HepG2 (cell line): ENCODE measurements at regions of chr6 and their contacts with region 1.

Region 1: GRCh38 chr6:137313928-137314855 is 95.0 kb upstream of the IFNGR1 start:
- DNase-seq: peak; percentile 71
- ATAC-seq: peak; percentile 87
- H3K4me3 ChIP-seq: no peak overlapping the region; a peak in 1 of 6 replicates
- H3K27ac ChIP-seq: peak overlapping the region; percentile 30
- H3K4me1 ChIP-seq: peaks cover 37% of the 10 kb centered on the region
- H3K27me3 ChIP-seq: no peaks in the 10 kb centered on the region
- CTCF ChIP-seq: peak; percentile 83
- EP300 ChIP-seq: peak in 1 of 2 experiments; percentile 51; a peak in 2 of 4 replicates
- POLR2A ChIP-seq: no peak
- RAD21 ChIP-seq: peak; percentile 77

Region 2: GRCh38 chr6:137076277-137077068 is 237.7 kb before region 1 on chr6:
- CTCF ChIA-PET with region 1: interaction called, 6 read pairs
- POLR2A ChIA-PET with region 1: no interaction called
- in situ Hi-C with region 1: no loop called
- intact Hi-C with region 1: loop called (anchors 1 kb)
- DNase-seq: peak; percentile 74
- ATAC-seq: peak; percentile 100
- H3K4me3 ChIP-seq: no peak overlapping the region
- H3K27ac ChIP-seq: no peak overlapping the region
- H3K4me1 ChIP-seq: no peaks in the 10 kb centered on the region
- H3K27me3 ChIP-seq: no peaks in the 10 kb centered on the region
- CTCF ChIP-seq: peak; percentile 93
- EP300 ChIP-seq: no peak
- POLR2A ChIP-seq: no peak
- RAD21 ChIP-seq: peak; percentile 85

Region 3: DNA sequence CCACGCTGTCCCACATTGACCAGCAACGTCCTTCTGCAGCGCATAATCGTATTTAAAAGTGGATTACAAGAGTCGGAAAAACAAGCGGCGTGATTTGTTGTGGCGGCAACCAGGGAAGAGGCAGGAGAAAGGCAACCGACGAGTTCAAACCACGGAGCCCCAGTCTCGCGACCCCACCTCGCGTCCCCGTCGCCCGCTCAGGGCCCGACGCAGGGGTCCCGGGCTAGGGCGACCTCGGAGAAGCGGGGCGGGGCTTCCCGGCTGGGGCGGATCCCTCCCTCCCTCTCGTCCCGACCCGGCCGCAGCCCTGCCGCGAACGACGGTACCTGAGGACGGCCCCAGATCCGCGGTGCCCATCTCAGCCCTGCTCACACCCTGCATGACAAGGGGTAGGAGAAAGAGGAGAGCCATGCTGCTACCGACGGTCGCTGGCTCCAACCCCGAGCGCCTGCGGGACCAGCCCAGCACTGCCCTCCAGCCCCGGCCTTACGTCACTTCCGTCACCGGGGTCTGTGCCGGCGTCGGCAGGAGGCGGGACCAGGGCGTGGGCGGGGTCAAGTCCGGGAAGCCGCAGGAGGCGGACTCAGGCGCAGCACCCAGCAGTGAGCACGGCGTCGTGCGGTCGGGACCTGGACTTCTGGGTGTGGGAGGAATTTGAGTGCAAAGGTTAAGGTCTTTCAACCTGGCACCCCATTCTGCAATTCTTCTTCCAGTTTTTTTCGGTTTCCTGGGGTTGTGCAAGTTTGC is 95.1 kb before region 1 on chr6 and contains the start of gene IFNGR1:
- CTCF ChIA-PET with region 1: no interaction called
- POLR2A ChIA-PET with region 1: interaction called, 3 read pairs
- in situ Hi-C with region 1: no loop called
- intact Hi-C with region 1: loop called (anchors 2 kb)
- DNase-seq: peak; percentile 98
- ATAC-seq: peak; percentile 93
- H3K4me3 ChIP-seq: peak within 1 kb of the TSS; percentile 87 to 93 (median 89)
- H3K27ac ChIP-seq: peak within 1 kb of the TSS; percentile 88
- H3K4me1 ChIP-seq: peaks cover 57% of the 10 kb centered on the region
- H3K27me3 ChIP-seq: peaks cover 0 to 4% of the 10 kb centered on the region in 2 experiments; a peak in 1 of 5 replicates
- CTCF ChIP-seq: no peak; the same call in 1 of the 2 replicates
- EP300 ChIP-seq: peak in 1 of 2 experiments; percentile 81; a peak in 3 of 4 replicates
- POLR2A ChIP-seq: peak; percentile 93 to 97
- RAD21 ChIP-seq: peak; percentile 55
- total RNA-seq, gene IFNGR1: 48.9 and 82.8 TPM in 2 replicates

Region 4: DNA sequence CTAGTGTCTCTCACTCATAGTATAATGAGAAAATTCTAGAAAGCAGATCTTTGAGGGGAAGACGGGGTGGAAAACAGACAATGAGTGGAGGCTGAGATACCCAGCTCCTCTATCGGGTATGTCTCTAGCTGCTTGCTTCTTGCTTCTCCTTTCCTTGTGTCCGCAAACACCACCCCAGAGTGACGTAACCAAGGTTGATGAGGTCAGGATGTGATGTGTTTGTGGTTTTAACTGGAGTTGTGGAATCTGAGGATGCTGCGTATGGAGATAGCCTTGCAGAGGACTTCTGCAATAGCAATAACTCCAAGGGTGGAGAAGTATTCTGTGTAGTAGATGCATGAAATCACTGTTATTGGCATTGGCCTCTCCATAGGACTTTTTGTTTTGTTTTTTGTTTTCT is 37.7 kb after region 1 on chr6:
- CTCF ChIA-PET with region 1: interaction called, 8 read pairs
- POLR2A ChIA-PET with region 1: interaction called, 37 read pairs
- in situ Hi-C with region 1: no loop called
- intact Hi-C with region 1: loop called (anchors 1 kb)
- DNase-seq: peak; percentile 86
- ATAC-seq: no peak
- H3K4me3 ChIP-seq: no peak overlapping the region
- H3K27ac ChIP-seq: peak overlapping the region; percentile 99
- H3K4me1 ChIP-seq: peaks cover 82% of the 10 kb centered on the region
- H3K27me3 ChIP-seq: no peaks in the 10 kb centered on the region
- CTCF ChIP-seq: no peak
- EP300 ChIP-seq: peak in 1 of 2 experiments; percentile 76; a peak in 2 of 4 replicates
- POLR2A ChIP-seq: no peak
- RAD21 ChIP-seq: no peak

Region 5: DNA sequence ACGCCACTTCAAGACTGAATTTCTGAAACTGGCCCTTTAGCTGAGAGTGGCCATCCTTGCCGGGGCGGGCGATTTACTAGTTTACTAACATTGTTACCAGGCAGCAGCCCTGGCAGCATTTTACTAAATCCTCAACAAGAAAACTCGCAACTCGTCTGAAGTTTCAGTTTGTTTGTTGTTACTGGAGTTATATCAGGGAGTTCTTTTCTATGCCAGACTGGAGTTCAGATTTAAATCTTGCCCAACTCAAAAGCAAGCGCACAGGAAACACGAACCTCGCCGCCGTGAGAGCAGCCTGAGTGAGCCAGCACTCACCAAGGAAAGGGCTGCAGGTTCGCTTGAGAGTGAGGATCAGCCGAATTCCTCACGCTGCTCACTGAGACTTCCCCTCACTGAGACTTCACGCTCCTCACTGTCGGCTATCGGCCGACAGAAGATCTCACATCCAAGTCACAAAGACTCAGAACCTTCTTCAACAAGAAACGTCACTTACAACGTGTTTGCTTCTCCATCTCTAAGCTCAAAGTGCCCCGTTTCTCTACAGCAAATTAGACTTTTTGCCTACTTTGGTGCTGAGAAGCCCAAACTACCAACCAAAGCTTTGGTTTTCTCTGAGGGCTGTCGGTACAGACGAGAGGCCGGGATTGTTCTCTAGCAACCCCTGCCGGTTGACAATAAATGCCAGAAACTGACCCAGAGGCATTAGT is 101.1 kb after region 1 on chr6:
- CTCF ChIA-PET with region 1: interaction called, 6 read pairs
- POLR2A ChIA-PET with region 1: no interaction called
- in situ Hi-C with region 1: no loop called
- intact Hi-C with region 1: loop called (anchors 1 kb)
- DNase-seq: peak; percentile 50
- ATAC-seq: peak; percentile 92
- H3K4me3 ChIP-seq: peak overlapping the region in 2 of 3 experiments; percentile 0 to 41; a peak in 2 of 6 replicates
- H3K27ac ChIP-seq: peak overlapping the region; percentile 27
- H3K4me1 ChIP-seq: peaks cover 33% of the 10 kb centered on the region
- H3K27me3 ChIP-seq: no peaks in the 10 kb centered on the region
- CTCF ChIP-seq: peak; percentile 79
- EP300 ChIP-seq: no peak
- POLR2A ChIP-seq: no peak
- RAD21 ChIP-seq: peak; percentile 80

Region 6: DNA sequence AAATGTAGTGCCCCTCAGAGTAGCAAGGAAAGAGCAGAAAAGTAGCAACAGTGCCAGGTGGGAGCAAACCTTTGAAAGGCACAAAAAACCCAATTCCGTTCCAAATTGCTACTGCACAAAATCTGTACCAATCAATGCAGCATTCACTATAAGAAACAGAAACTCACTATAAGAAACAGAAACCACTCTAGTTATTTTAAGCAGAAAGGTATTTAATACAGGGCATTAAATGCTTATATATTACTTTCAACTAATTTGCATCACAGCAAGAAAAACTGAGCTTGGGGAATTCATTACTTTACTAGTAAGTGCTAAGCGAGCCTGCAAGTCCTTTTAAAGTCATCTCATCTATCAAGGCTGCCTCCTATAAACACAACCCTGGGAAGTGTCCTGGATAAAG is 296.5 kb after region 1 on chr6:
- CTCF ChIA-PET with region 1: no interaction called
- POLR2A ChIA-PET with region 1: no interaction called
- in situ Hi-C with region 1: no loop called
- intact Hi-C with region 1: loop called (anchors 1 kb)
- DNase-seq: no peak
- ATAC-seq: no peak
- H3K4me3 ChIP-seq: no peak overlapping the region
- H3K27ac ChIP-seq: no peak overlapping the region
- H3K4me1 ChIP-seq: no peaks in the 10 kb centered on the region
- H3K27me3 ChIP-seq: no peaks in the 10 kb centered on the region
- CTCF ChIP-seq: no peak
- EP300 ChIP-seq: no peak
- POLR2A ChIP-seq: no peak
- RAD21 ChIP-seq: no peak